ENCODE measurements at regions of chr3 and their contacts with region 1.

Region 1: DNA sequence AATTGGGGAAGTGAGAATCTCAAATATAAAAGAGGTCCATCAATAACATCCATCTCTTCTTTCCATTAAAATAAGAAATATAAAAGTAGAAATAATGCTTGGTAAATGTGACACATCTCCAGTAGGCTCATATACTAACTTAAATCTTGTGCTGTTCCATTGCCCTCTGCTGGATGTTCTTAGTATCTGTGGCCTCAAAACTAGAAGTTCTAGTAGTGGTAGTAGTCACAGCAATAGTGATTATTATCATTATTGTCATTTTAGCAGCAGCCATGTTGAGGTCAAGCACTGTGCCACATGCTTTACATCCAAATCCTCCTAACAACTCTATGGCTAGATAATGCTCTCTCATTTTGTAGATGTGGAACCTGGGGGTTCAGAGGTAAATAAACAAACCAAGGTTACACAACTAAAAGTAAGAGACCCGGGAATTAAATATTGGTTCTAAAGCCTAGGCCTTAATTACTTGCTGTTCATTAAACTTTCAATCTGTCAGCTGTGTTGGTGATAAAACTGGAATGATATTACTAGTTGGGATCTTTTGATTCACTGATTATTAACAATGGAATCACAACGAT is 20.2 kb upstream of the BTLA start:
- DNase-seq: no peak
- H3K4me3 ChIP-seq: no peak overlapping the region
- H3K27ac ChIP-seq: no peak overlapping the region
- H3K4me1 ChIP-seq: no peaks in the 10 kb centered on the region
- H3K27me3 ChIP-seq: no peaks in the 10 kb centered on the region
- CTCF ChIP-seq: peak; percentile 34 to 76 (median 66)
- EP300 ChIP-seq: no peak
- POLR2A ChIP-seq: no peak

Region 2: DNA sequence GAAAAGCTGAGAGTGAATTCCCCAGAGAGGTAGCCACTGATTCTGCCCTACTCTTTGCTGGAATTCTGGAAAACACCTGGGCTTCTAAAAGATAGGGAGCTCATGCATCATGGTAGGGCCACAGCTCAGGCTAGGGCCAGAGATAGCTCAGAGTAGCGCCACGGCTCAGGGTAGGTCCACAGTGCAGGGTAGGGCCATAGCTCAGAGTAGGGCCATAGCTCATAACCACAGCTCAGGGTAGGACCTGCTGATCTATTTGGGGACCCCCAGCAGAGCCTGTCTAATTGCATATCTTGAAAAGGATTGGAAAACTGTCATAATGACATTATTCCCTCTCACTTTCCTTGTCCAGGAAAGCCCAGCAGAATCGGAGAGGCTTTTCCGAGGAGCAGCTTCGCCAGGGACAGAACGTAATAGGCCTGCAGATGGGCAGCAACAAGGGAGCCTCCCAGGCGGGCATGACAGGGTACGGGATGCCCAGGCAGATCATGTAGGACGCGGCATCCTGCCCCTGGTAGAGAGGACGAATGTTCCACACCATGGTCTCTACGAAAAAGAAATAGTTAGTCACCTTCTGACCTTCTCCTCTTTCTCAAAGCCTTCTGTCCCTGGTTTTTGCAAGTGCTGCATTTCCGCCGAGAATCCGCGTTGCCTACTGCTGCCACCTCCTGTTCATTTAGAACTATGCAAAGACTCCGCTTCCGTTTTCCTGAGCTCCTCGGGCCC is 506.3 kb before region 1 on chr3:
- intact Hi-C with region 1: no loop called
- DNase-seq: peak; percentile 78
- H3K4me3 ChIP-seq: peak overlapping the region in 1 of 4 donors; percentile 18
- H3K27ac ChIP-seq: peak overlapping the region in 1 of 4 donors; percentile 32
- H3K4me1 ChIP-seq: peaks cover 0 to 10% (median 2%) of the 10 kb centered on the region in 4 donors
- H3K27me3 ChIP-seq: no peaks in the 10 kb centered on the region
- CTCF ChIP-seq: peak; percentile 64 to 72 (median 67)
- EP300 ChIP-seq: no peak
- POLR2A ChIP-seq: no peak

Region 3: DNA sequence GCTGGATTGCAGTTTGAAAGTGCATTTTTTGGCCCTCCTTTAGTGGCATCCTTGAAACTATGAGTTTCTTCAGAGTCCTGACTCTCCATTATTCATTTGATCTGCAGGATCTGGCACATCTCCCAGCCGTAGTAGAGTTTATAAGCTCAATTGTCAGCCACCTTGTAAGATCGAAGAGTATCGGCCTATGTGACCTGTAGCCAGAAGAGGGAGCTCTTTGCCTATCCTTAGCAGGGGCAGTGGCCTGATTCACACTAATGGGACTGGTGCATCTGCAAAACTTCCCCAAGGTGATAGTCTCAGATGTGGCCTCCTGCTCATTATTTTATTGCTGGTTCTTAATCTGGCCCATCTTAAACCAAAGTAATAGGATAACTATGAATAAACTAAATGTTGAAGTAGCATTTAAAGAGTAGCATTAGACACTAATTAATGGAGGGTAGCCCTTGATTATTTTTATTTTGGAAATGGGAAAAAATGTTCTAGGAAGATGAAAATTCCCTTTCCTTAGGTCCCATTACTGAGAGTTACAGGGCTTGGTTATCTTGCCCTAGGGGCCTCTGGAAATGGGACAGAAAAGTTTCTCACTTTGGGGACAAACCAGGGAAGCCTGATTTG is 407.6 kb before region 1 on chr3:
- intact Hi-C with region 1: loop called (anchors 10 kb)
- DNase-seq: no peak
- H3K4me3 ChIP-seq: no peak overlapping the region
- H3K27ac ChIP-seq: no peak overlapping the region
- H3K4me1 ChIP-seq: no peaks in the 10 kb centered on the region
- H3K27me3 ChIP-seq: no peaks in the 10 kb centered on the region
- CTCF ChIP-seq: peak in 3 of 4 experiments; percentile 19 to 49 (median 40)
- EP300 ChIP-seq: no peak
- POLR2A ChIP-seq: no peak

Region 4: DNA sequence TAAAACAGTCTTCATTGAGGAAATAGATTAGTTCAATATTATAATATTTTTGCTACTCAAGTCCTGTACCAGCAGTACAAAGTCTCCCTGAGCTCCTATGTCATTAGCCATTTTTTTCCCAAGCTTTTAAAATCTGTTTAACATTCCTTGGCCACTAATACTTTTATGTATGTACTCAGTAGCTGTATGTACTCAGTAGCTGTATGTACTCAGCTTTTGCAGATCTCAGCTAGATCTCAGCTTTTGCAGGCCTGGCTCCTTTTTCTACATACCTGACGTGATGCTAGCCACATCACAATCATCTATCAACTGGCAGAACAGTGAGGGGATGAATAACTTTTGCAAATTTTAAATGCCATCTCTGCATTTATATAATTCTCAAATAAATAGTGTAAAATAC is 239.2 kb before region 1 on chr3:
- intact Hi-C with region 1: no loop called
- DNase-seq: no peak
- H3K4me3 ChIP-seq: no peak overlapping the region
- H3K27ac ChIP-seq: no peak overlapping the region
- H3K4me1 ChIP-seq: no peaks in the 10 kb centered on the region
- H3K27me3 ChIP-seq: no peaks in the 10 kb centered on the region
- CTCF ChIP-seq: no peak
- EP300 ChIP-seq: no peak
- POLR2A ChIP-seq: no peak

Region 5: DNA sequence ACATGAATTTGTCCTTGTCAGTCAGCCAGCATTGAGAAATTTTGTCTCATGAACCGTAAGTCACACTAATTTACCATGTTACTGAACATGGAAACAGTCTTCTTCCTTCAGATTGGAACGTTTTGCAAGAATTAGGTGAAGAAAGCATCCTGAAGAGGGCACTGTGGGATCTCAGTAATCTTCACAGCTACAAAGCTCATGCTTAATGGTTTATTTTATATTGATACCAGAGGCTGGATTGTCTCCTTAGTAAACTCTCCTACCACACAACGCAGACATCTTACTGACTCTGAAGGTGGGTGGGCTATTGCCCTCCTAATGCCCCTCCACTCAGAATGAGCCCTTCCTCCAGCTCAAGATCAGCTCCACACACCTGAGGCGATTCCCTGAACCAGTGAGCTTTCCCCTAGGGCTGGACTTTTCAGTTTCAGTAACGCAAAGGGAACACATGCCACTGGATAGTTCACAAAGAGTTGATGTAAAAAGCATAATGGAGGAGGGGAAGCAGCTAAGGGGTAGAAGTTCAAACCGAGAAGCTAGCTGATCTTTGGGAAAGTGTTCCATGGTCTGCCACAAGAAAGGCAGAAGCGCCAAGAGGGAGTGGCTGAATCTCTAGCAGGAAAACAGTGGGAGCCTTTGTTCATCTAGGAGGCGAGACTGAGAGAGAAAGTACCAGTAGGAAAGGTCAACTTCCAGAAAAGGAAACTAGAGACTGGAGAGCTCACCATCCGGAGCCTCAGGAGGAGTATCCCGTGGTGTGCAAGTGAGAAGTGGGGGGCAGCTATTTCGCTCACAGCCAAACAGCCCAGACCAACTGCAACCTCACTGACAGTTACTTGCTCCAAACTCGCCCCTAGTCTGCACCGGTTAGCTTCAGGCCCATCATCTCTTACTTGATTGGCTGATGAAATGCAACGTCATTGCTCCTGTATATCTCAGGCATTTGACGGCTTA is 225.9 kb before region 1 on chr3 and contains the start of gene SLC9C1:
- intact Hi-C with region 1: loop called (anchors 2 kb)
- DNase-seq: no peak
- H3K4me3 ChIP-seq: peak within 1 kb of the TSS; percentile 5 to 48 (median 40)
- H3K27ac ChIP-seq: peak within 1 kb of the TSS; percentile 56 to 74 (median 68)
- H3K4me1 ChIP-seq: no peaks in the 10 kb centered on the region
- H3K27me3 ChIP-seq: no peaks in the 10 kb centered on the region
- CTCF ChIP-seq: peak in 3 of 4 experiments; percentile 47 to 57 (median 51)
- EP300 ChIP-seq: no peak
- POLR2A ChIP-seq: no peak
- total RNA-seq, gene SLC9C1: 0.41 TPM in 1 of 4 donors, not detected in the others

Region 6: DNA sequence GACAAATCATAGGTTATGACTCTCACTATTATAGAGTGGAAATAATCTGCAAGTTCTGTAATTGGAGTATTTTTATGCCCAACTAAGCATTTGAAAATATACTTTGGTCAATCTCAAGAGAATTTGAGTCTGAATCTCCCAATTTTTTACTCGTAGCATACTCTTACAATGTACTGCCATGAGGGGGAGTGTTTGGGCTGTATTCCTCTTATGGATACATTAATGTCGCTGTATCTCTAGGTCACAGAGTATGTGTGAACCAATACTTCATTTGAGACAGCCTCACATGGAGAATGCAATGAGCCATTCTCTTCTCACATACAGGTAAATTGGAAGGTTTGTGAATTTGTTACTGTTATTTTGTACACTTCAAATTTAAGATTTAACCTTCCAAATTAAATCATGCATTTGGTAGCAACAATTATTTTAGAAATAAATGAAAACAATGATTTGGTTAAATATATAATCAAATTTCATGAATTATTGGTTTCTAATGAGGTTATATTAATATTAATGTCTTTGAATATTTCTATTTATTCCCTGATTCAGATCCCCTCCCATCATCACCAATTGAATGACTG is 192.1 kb before region 1 on chr3:
- intact Hi-C with region 1: loop called (anchors 2 kb)
- DNase-seq: no peak
- H3K4me3 ChIP-seq: no peak overlapping the region
- H3K27ac ChIP-seq: no peak overlapping the region
- H3K4me1 ChIP-seq: peaks cover 0 to under 1% (median under 1%) of the 10 kb centered on the region in 4 donors
- H3K27me3 ChIP-seq: no peaks in the 10 kb centered on the region
- CTCF ChIP-seq: peak; percentile 34 to 61 (median 50)
- EP300 ChIP-seq: no peak
- POLR2A ChIP-seq: no peak

Region 7: GRCh38 chr3:112357930-112358780 is 161.4 kb before region 1 on chr3:
- intact Hi-C with region 1: no loop called
- DNase-seq: no peak
- H3K4me3 ChIP-seq: no peak overlapping the region
- H3K27ac ChIP-seq: peak overlapping the region; percentile 42 to 64 (median 52)
- H3K4me1 ChIP-seq: peaks cover 0 to 16% (median 6%) of the 10 kb centered on the region in 4 donors
- H3K27me3 ChIP-seq: no peaks in the 10 kb centered on the region
- CTCF ChIP-seq: no peak
- EP300 ChIP-seq: no peak
- POLR2A ChIP-seq: no peak

Measured in sigmoid colon (tissue), 7 donors.